SK-N-SH (cell line): ENCODE measurements at regions of chr9 and their contacts with region 1.

Region 1: DNA sequence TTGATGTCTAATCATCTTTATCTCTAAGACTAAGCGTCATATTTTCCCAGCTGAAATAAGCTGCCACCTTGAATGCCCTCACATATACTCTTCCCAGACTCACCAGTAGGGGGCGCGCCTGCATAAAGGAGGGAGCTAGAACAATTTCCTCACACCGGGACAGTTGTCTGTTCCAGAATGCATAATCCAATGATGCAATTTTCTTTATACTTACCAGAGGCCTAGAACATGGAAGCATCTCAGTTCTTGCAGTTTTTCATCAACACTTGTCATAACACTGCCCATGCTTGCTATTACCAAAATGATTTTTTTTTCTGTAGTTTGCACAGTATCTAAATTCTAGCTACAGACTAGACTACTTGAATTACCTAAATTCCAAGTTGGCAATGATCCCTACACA is 203.9 kb downstream of the FRMD3 start:
- DNase-seq: peak; percentile 53
- H3K4me3 ChIP-seq: peak overlapping the region in 1 of 2 experiments; percentile 27; a peak in 1 of 4 replicates
- H3K27ac ChIP-seq: peak overlapping the region in 1 of 2 experiments; percentile 8; a peak in 2 of 4 replicates
- H3K4me1 ChIP-seq: no peaks in the 10 kb centered on the region; a peak in 2 of 4 replicates
- H3K27me3 ChIP-seq: no peaks in the 10 kb centered on the region
- CTCF ChIP-seq: peak; percentile 97
- EP300 ChIP-seq: no peak; a peak in 1 of 4 replicates
- RAD21 ChIP-seq: peak; percentile 99

Region 2: GRCh38 chr9:82302968-82303655 is 1031.2 kb before region 1 on chr9:
- CTCF ChIA-PET with region 1: no interaction called
- POLR2A ChIA-PET with region 1: no interaction called
- DNase-seq: no peak
- H3K4me3 ChIP-seq: no peak overlapping the region
- H3K27ac ChIP-seq: no peak overlapping the region
- H3K4me1 ChIP-seq: no peaks in the 10 kb centered on the region
- H3K27me3 ChIP-seq: no peaks in the 10 kb centered on the region
- CTCF ChIP-seq: no peak
- EP300 ChIP-seq: no peak
- RAD21 ChIP-seq: no peak

Region 3: DNA sequence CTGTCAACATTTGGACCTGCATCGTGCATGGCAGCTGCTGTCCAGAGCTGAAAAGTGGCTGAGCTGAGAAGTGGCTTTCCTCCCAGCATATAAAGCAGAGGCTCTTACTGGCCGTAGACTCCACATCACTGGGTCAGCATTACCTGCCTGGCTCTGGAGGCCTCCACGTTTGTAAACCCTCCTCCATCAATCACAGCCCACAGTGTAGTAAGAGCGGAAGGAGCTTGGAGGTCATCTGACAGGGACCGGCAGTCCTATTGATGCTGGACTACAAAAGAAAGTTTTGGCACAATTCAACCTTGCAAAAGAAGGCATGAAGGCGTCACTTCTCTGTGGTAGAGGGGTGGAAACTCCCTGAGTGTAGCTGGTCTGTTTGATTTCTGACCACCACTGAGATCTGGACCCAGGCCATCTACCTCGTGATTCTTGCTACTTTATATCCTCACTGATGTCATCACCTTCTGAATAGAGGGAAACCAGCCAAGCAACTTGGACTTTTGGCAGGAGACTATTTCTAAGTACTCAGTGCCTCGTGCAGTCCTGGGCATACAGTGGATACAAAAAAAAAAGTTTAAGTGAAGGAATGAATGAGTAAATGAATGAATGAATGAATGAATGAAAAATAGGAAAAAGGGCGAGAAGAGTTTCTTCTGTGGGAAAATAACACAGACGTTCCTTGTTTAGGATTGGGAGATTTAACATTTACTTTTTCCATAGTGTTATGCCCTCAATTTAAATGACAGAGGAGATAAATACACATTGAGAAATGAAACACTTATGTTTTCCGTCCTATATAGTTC is 286.1 kb before region 1 on chr9:
- CTCF ChIA-PET with region 1: no interaction called
- POLR2A ChIA-PET with region 1: no interaction called
- DNase-seq: no peak
- H3K4me3 ChIP-seq: no peak overlapping the region
- H3K27ac ChIP-seq: no peak overlapping the region
- H3K4me1 ChIP-seq: peaks cover 0 to 15% of the 10 kb centered on the region in 2 experiments; a peak in 2 of 4 replicates
- H3K27me3 ChIP-seq: no peaks in the 10 kb centered on the region; the same call in 1 of the 2 replicates
- CTCF ChIP-seq: no peak
- EP300 ChIP-seq: no peak
- RAD21 ChIP-seq: no peak

Region 4: GRCh38 chr9:83219152-83219923 is 115.0 kb before region 1 on chr9:
- CTCF ChIA-PET with region 1: interaction called, 43 read pairs
- POLR2A ChIA-PET with region 1: interaction called, 4 read pairs
- DNase-seq: peak; percentile 84
- H3K4me3 ChIP-seq: peak overlapping the region; percentile 80 to 83
- H3K27ac ChIP-seq: peak overlapping the region; percentile 57 to 93; a peak in 3 of 4 replicates
- H3K4me1 ChIP-seq: peaks cover 0 to 17% of the 10 kb centered on the region in 2 experiments; a peak in 3 of 4 replicates
- H3K27me3 ChIP-seq: no peaks in the 10 kb centered on the region
- CTCF ChIP-seq: peak; percentile 45
- EP300 ChIP-seq: no peak
- RAD21 ChIP-seq: peak; percentile 82

Region 5: GRCh38 chr9:83355024-83355444 is 20.7 kb after region 1 on chr9:
- CTCF ChIA-PET with region 1: interaction called, 34 read pairs
- POLR2A ChIA-PET with region 1: interaction called, 4 read pairs
- DNase-seq: no peak
- H3K4me3 ChIP-seq: no peak overlapping the region
- H3K27ac ChIP-seq: peak overlapping the region in 1 of 2 experiments; percentile 97; a peak in 2 of 4 replicates
- H3K4me1 ChIP-seq: peaks cover 0 to 9% of the 10 kb centered on the region in 2 experiments; a peak in 2 of 4 replicates
- H3K27me3 ChIP-seq: no peaks in the 10 kb centered on the region
- CTCF ChIP-seq: no peak
- EP300 ChIP-seq: no peak
- RAD21 ChIP-seq: no peak

Region 6: GRCh38 chr9:83533296-83533695 is 199.0 kb after region 1 on chr9:
- CTCF ChIA-PET with region 1: interaction called, 89 read pairs
- POLR2A ChIA-PET with region 1: interaction called, 4 read pairs
- DNase-seq: no peak
- H3K4me3 ChIP-seq: no peak overlapping the region
- H3K27ac ChIP-seq: no peak overlapping the region
- H3K4me1 ChIP-seq: peaks cover 0 to 17% of the 10 kb centered on the region in 2 experiments; a peak in 2 of 4 replicates
- H3K27me3 ChIP-seq: no peaks in the 10 kb centered on the region
- CTCF ChIP-seq: no peak
- EP300 ChIP-seq: no peak
- RAD21 ChIP-seq: no peak

Region 7: DNA sequence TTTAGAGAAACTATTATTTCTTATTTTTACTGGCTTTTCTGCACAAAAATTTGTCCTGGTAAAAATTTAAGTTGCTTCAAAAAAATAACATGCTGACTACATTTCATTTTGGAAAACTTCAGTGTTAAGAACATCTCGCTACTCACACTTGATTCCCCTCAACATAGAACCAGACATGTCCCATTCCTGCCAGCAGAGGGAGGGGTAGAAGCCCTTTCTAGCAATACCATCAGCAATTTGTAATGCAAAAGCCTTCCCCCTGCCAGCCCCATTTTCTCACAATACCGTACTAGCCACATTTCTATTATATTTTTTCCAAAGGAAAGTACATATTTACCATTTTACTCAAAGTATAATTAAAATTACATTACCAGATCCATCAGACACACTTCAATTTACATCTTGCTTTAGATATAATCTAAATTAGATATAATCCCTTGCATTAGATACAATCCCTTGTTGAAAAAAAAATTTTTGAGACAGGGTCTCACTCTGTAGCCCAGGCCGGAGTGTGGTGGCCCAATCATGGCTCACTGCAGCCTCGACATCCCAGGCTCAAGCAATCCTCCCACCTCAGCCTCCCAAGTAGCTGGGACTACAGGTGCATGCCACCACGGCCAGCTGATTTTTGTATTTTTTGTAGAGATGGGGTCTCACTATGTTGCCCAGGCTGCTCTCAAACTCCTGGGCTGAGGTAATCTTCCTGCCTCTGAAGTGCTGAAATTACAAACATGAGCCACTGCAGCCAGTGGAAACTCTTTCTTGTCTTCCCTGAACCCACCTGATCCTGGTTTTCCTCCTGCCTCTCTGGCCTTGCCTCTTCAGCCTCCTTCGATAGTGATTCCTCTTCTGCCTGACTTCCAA is 249.1 kb after region 1 on chr9:
- CTCF ChIA-PET with region 1: interaction called, 11 read pairs
- POLR2A ChIA-PET with region 1: no interaction called
- DNase-seq: peak; percentile 64
- H3K4me3 ChIP-seq: no peak overlapping the region; a peak in 1 of 4 replicates
- H3K27ac ChIP-seq: no peak overlapping the region
- H3K4me1 ChIP-seq: no peaks in the 10 kb centered on the region
- H3K27me3 ChIP-seq: no peaks in the 10 kb centered on the region
- CTCF ChIP-seq: peak; percentile 80
- EP300 ChIP-seq: no peak
- RAD21 ChIP-seq: peak; percentile 63

Region 8: GRCh38 chr9:83649080-83649479 is 314.8 kb after region 1 on chr9:
- CTCF ChIA-PET with region 1: interaction called, 20 read pairs
- POLR2A ChIA-PET with region 1: no interaction called
- DNase-seq: peak; percentile 77
- H3K4me3 ChIP-seq: no peak overlapping the region; a peak in 1 of 4 replicates
- H3K27ac ChIP-seq: peak overlapping the region in 1 of 2 experiments; percentile 85; a peak in 2 of 4 replicates
- H3K4me1 ChIP-seq: peaks cover 0 to 13% of the 10 kb centered on the region in 2 experiments; a peak in 3 of 4 replicates
- H3K27me3 ChIP-seq: no peaks in the 10 kb centered on the region
- CTCF ChIP-seq: peak; percentile 73
- EP300 ChIP-seq: no peak
- RAD21 ChIP-seq: peak; percentile 80